Naive thymus-derived CD8-positive, alpha-beta T cell (primary cell): ENCODE measurements at regions of chr18 and their contacts with region 1.

Region 1: DNA sequence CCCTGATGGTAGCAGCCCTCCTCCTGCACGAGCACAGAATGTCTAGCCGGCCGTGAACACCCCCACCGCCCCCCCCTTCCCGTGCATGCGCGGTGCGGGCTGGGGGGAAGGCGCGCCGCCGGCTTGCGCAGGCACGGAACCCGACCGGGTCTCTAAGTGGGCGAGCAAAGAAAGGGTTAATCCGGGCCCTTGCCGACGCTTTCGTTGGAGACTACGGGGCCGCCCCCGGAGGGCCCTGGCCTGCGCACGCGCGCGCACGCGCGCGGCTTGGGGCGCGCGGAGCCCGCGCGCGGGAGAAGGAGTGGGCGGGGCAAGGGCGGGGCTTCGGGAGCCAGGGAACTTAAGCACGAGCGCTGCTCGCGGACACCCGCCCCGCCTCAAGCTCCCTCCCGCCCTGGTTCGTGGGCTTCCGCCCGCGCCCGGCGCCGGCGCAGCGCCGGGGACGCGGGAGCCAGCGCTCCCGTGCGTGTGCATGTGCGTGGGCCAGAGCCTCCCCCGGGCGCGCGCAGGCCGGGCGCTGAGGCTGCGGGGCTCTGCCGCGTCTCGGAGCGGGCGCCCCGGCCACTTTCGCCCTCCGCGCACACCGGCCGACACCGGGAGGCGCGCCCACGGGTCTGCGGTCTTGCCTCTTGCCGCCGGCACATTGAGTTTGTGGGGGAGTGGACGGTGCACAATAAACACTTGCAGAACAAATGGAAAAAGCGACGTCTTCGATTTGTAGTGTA is 617 bp upstream of the ZBTB14 start:
- DNase-seq: peak; percentile 92 to 97 (median 96)
- ATAC-seq: peak; percentile 61 to 68
- H3K4me3 Mint-ChIP-seq: peak overlapping the region; percentile 92 to 97 (median 95)
- H3K27ac Mint-ChIP-seq: peak overlapping the region; percentile 94 to 98 (median 96)
- H3K4me1 Mint-ChIP-seq: peaks cover 15 to 41% (median 36%) of the 10 kb centered on the region in 4 donors
- H3K27me3 Mint-ChIP-seq: peaks cover 0 to 5% (median 0%) of the 10 kb centered on the region in 5 donors

Region 2: DNA sequence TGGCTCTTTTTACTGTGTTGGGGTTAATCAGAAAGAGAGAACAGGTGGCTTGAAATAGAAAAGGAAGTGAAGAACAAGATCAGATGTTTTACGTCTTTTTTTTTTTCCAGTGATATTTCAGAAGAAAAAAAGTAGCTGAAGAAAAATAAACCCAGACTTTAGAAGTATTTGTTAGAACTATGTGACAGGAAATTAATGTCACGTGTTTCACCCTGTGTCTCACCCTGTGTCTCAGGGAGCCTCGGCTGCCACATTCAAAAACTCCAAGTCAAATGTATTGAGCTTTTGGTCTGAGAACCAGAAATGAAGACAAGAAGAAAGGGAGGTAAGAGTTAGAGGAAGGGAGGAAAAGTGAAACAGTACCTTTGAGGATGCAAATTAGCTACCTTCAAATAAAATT is 137.1 kb before region 1 on chr18:
- POLR2A ChIA-PET with region 1: interaction called, 97 read pairs
- DNase-seq: peak in 8 of 10 donors; percentile 20 to 71 (median 46)
- ATAC-seq: peak; percentile 94 to 97
- H3K4me3 Mint-ChIP-seq: peak overlapping the region; percentile 38 to 89 (median 78)
- H3K27ac Mint-ChIP-seq: peak overlapping the region; percentile 84 to 97 (median 94)
- H3K4me1 Mint-ChIP-seq: peaks cover 25 to 40% (median 37%) of the 10 kb centered on the region in 4 donors
- H3K27me3 Mint-ChIP-seq: no peaks in the 10 kb centered on the region

Region 3: DNA sequence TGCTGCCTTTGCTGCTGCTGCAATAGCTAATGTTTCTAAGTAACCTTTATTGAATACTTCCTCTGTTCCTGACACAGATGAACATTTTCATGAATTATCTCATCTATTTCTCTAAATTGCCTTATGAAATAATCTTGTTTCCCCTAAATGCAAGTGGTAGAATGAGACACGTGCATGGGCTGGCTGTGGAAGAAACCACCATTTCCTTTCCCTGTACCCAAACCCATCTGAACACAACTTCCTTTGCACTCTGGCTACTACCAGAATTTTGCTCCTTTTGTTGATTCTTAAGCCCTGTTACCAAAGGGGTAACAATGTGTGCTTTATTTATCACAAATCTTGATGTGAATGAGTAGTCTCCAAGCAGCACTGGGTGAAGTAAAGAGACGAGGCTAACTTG is 128.3 kb before region 1 on chr18:
- POLR2A ChIA-PET with region 1: interaction called, 97 read pairs
- DNase-seq: peak in 4 of 10 donors; percentile 9 to 51 (median 32)
- ATAC-seq: peak; percentile 75 to 92
- H3K4me3 Mint-ChIP-seq: peak overlapping the region; percentile 29 to 83 (median 70)
- H3K27ac Mint-ChIP-seq: peak overlapping the region; percentile 81 to 93 (median 88)
- H3K4me1 Mint-ChIP-seq: peaks cover 26 to 36% (median 32%) of the 10 kb centered on the region in 4 donors
- H3K27me3 Mint-ChIP-seq: peaks cover 0 to 1% (median 0%) of the 10 kb centered on the region in 5 donors

Region 4: GRCh38 chr18:5237723-5238370 is 58.3 kb before region 1 on chr18:
- POLR2A ChIA-PET with region 1: interaction called, 289 read pairs
- DNase-seq: peak; percentile 68 to 97 (median 86)
- ATAC-seq: peak; percentile 87 to 88
- H3K4me3 Mint-ChIP-seq: peak overlapping the region; percentile 92 to 97 (median 94)
- H3K27ac Mint-ChIP-seq: peak overlapping the region; percentile 97 to 99 (median 98)
- H3K4me1 Mint-ChIP-seq: peaks cover 19 to 58% (median 43%) of the 10 kb centered on the region in 4 donors
- H3K27me3 Mint-ChIP-seq: peaks cover 0 to 6% (median 0%) of the 10 kb centered on the region in 5 donors

Region 5: DNA sequence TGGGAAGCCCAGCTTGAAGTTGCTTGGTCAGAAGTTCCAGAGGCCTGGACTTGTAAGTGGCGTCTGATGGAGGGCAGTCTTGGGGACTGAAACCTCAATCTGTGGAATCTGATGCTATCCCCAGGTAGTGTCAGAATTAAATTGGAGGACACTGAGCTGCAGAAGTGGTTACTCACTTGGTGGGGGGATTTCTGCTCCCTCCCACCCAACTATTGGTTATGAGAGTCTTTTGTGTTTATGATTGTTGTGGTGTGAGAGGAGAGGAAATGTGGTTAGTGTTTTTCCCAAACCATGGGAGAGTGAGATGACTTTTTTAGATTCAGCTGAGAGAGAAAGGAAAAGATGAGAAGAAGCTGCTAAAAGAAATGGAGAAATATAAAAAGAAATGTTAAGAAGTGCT is 13.4 kb before region 1 on chr18:
- POLR2A ChIA-PET with region 1: interaction called, 11 read pairs
- DNase-seq: no peak
- ATAC-seq: no peak
- H3K4me3 Mint-ChIP-seq: peak overlapping the region in 1 of 10 donors; percentile 7
- H3K27ac Mint-ChIP-seq: peak overlapping the region in 3 of 10 donors; percentile 0 to 20 (median 4)
- H3K4me1 Mint-ChIP-seq: peaks cover 14 to 28% (median 26%) of the 10 kb centered on the region in 4 donors
- H3K27me3 Mint-ChIP-seq: peaks cover 0 to under 1% (median 0%) of the 10 kb centered on the region in 5 donors

Region 6: GRCh38 chr18:5309888-5310470 is 13.8 kb after region 1 on chr18:
- POLR2A ChIA-PET with region 1: interaction called, 110 read pairs
- DNase-seq: peak in 7 of 10 donors; percentile 19 to 65 (median 39)
- ATAC-seq: peak; percentile 96 to 98
- H3K4me3 Mint-ChIP-seq: peak overlapping the region; percentile 74 to 89 (median 86)
- H3K27ac Mint-ChIP-seq: peak overlapping the region; percentile 80 to 95 (median 94)
- H3K4me1 Mint-ChIP-seq: peaks cover 13 to 32% (median 28%) of the 10 kb centered on the region in 4 donors
- H3K27me3 Mint-ChIP-seq: no peaks in the 10 kb centered on the region

Region 7: DNA sequence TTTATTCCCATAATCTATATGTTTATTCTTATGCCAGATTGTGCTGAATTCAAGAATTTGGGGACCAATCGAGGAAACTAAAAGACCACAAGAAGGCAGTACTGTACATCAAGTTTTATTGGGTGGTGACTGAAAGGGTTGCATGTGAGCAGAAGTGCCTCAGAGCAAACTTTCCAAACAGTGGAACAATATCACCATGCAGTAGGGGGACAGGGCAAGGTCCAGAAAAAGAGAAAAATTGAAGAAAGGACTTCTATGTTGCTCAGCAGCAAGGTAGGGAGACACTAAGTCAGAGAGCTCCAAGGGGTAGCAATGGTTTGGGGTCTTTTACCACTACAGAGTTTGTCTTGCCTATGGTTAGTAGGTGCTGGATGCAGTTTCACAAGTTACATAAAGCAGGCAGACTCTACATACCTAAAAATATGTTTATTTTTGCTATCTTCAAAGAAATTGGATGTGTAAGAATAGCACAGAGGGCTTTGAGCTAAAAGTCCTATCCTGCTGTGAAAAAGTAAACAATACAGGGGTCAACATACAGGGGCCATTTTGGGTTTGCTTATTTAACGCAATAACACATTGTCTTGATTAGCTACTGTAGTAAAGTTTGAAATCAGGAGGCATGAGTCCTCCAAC is 43.2 kb after region 1 on chr18:
- POLR2A ChIA-PET with region 1: no interaction called
- DNase-seq: no peak
- ATAC-seq: no peak
- H3K4me3 Mint-ChIP-seq: no peak overlapping the region
- H3K27ac Mint-ChIP-seq: no peak overlapping the region
- H3K4me1 Mint-ChIP-seq: no peaks in the 10 kb centered on the region
- H3K27me3 Mint-ChIP-seq: peaks cover 0 to 7% (median 0%) of the 10 kb centered on the region in 5 donors

Region 8: GRCh38 chr18:5456577-5457463 is 160.7 kb after region 1 on chr18:
- POLR2A ChIA-PET with region 1: interaction called, 14 read pairs
- DNase-seq: peak in 3 of 10 donors; percentile 18 to 43 (median 26)
- ATAC-seq: peak; percentile 80 to 82
- H3K4me3 Mint-ChIP-seq: peak overlapping the region in 9 of 10 donors; percentile 39 to 82 (median 66)
- H3K27ac Mint-ChIP-seq: peak overlapping the region in 9 of 10 donors; percentile 18 to 94 (median 86)
- H3K4me1 Mint-ChIP-seq: peaks cover 0 to 20% (median 8%) of the 10 kb centered on the region in 4 donors
- H3K27me3 Mint-ChIP-seq: peaks cover 0 to 19% (median 0%) of the 10 kb centered on the region in 5 donors